WTC11 (cell line): ENCODE measurements at regions of chr12 and their contacts with region 1.

Region 1: GRCh38 chr12:12338527-12339168 is 11.4 kb downstream of the MANSC1 start:
- DNase-seq: no peak
- ATAC-seq: no peak; the same call in 1 of the 2 replicates
- H3K4me3 Mint-ChIP-seq: no peak overlapping the region
- H3K27ac Mint-ChIP-seq: 0 out of 2 replicates have a peak overlapping the region, but pooled peaks have one; percentile 53
- H3K4me1 Mint-ChIP-seq: peaks cover 12% of the 10 kb centered on the region
- H3K27me3 Mint-ChIP-seq: no peaks in the 10 kb centered on the region; the same call in 1 of the 2 replicates
- CTCF ChIP-seq: no peak

Region 2: DNA sequence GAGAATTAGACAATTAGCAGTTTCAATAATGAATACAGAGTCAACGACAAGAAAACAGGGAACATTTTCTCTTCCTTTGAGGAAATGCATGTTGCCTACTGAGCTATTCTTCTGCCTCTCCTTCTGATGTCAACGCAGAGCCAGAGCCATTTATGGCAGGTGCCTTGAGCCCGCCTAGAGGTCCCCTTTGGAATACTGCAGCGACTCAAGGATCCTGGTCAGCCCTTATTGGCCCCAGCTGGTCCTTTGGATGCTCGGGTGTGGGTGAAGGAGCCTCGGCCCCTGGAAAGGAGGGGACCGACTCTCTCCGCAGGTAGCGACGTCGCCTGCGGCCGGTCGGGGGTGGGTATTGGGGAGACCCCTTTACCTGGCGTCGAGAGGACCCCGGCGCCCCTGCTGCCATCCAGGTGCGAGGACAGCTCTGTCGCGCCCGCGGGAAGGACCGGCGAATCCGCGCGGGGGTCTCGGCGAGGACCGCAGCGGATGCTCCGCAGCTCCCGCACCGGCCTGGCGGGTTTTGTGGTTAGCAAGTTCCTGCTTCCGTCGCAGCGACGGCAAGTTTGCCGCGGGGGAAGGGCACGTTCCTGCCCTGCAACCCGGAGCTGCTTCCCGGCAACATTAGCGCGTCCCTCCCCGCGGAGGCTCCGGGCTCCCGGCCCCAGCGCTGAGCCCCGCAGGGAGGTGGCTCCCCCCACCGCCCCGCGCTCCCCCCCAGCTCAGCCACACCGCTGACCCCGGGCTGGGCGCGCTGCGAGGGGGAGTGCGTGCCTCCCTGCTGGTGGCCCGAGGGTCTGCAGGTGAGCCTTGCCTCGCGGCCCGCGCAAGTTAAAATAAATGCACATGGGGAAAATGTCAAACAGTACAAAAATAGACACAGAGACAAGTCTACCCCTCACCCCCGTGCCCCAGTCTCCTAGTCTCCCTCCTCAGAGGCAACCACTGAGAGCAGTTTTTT is 11.3 kb after region 1 on chr12 and contains the start of gene MANSC1:
- CTCF ChIA-PET with region 1: interaction called, 11 read pairs
- POLR2A ChIA-PET with region 1: no interaction called
- DNase-seq: peak; percentile 71
- ATAC-seq: peak; percentile 92
- H3K4me3 Mint-ChIP-seq: peak within 1 kb of the TSS; percentile 70
- H3K27ac Mint-ChIP-seq: no peak within 1 kb of the TSS
- H3K4me1 Mint-ChIP-seq: peaks cover 24% of the 10 kb centered on the region
- H3K27me3 Mint-ChIP-seq: peaks cover 11% of the 10 kb centered on the region
- CTCF ChIP-seq: 0 out of 2 replicates have a peak, but pooled peaks have one; percentile 25
- total RNA-seq, gene MANSC1: 6.8 to 10.7 TPM (median 10.6 TPM) in 3 replicates